Posterior cingulate gyrus (tissue), 11 donors: ENCODE measurements at regions of chr22 and their contacts with region 1.

Region 1: GRCh38 chr22:22848364-22848866 is 39.2 kb upstream of the IGLL5 start:
- DNase-seq: peak in 7 of 10 donors; percentile 19 to 92 (median 57)

Region 2: GRCh38 chr22:22884010-22884887 is 35.8 kb after region 1 on chr22:
- intact Hi-C with region 1: loop called (anchors 1 kb)
- DNase-seq: peak in 4 of 10 donors; percentile 34 to 51 (median 38)

Region 3: GRCh38 chr22:23088199-23088604 is 239.8 kb after region 1 on chr22:
- intact Hi-C with region 1: no loop called
- DNase-seq: no peak